ENCODE measurements at regions of chr6 and their contacts with region 1.

Region 1: DNA sequence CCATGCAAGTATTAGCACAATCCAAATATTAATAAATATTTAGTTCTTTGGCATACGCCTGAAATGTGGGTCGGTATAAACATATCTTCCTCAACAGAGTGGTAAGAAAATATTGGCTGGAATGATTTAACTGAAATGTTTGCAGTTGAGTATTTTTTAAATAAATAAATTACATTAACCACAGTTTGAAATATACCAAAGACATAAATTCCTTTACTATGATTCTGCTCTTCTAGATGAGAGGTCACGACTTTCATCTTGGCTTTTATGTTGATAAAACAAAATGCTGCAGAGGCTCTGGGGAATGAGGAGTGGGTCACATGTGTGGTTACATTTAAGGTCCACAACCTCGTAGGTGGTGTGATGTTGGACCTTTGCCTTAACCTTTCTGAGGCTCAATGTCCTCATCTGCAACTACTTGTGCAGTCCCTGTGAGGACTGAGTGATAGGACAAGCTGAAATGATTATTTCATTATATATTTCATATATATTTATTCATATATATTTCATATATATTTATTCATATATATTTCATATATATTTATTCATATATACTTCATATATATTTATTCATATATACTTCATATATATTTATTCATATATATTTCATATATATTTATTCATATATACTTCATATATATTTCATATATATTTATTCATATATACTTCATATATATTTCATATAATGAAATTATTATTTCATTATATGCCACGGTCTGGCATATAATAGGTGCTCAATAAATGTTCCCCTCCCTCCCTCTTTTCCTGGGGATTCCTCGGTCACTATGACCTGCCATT is 107.4 kb downstream of the SAMD5 start:
- DNase-seq: no peak
- ATAC-seq: no peak
- H3K4me3 ChIP-seq: no peak overlapping the region
- H3K27ac ChIP-seq: no peak overlapping the region
- H3K4me1 ChIP-seq: no peaks in the 10 kb centered on the region
- H3K27me3 ChIP-seq: no peaks in the 10 kb centered on the region
- CTCF ChIP-seq: no peak
- POLR2A ChIP-seq: no peak
- RAD21 ChIP-seq: no peak

Region 2: DNA sequence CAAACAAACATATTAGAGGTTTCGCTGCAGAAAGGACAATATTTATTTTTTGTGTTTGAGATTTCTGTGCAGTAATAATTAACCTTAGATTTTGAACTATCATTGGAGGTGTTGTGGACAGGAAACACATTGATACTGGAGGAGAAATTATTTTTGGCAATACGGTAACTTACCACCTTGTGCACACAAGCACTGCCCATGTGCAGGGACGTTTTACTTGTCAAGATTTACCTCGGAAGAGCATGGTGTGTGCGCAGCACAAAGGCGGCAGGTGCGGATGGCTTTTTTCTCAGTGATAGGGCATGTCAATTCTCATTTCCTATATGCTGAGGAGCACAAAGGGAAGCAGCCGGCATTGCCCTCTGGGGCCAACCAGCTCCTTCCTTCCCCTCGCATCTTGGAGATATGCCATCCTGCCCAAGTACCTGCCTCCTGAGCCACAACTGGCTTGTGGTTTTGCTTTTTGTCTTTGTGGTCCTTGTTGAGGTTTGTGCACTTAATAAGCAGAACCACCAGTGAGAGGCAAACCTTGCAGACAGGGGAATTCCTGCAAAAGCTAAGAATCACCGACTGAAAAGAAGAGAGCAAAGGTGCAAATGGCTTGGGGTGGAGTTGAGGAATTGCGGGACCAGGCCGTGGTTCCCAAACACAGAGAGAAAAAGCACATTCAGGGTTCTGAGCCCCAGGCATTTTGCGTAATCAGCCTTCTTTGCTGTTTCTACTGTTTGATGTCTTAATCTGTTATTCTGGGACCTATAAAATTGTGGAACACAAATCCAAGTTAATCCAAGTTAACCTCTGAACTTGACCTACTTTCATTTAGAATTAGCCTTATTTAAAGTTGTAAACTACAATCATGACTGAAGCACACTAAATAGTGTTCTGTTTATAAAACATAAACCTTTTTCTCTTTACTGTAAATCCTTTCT is 85.5 kb before region 1 on chr6:
- CTCF ChIA-PET with region 1: no interaction called
- POLR2A ChIA-PET with region 1: no interaction called
- RAD21 ChIA-PET with region 1: no interaction called
- intact Hi-C with region 1: no loop called
- DNase-seq: no peak
- ATAC-seq: no peak
- H3K4me3 ChIP-seq: no peak overlapping the region
- H3K27ac ChIP-seq: no peak overlapping the region
- H3K4me1 ChIP-seq: peaks cover 4 to 6% of the 10 kb centered on the region in 2 experiments; a peak in 2 of 4 replicates
- H3K27me3 ChIP-seq: no peaks in the 10 kb centered on the region
- CTCF ChIP-seq: no peak
- POLR2A ChIP-seq: no peak
- RAD21 ChIP-seq: no peak

Region 3: GRCh38 chr6:147579667-147580066 is 36.2 kb before region 1 on chr6:
- CTCF ChIA-PET with region 1: no interaction called
- POLR2A ChIA-PET with region 1: no interaction called
- RAD21 ChIA-PET with region 1: no interaction called
- intact Hi-C with region 1: loop called (anchors 1 kb)
- DNase-seq: no peak
- ATAC-seq: no peak
- H3K4me3 ChIP-seq: no peak overlapping the region
- H3K27ac ChIP-seq: no peak overlapping the region
- H3K4me1 ChIP-seq: no peaks in the 10 kb centered on the region
- H3K27me3 ChIP-seq: no peaks in the 10 kb centered on the region
- CTCF ChIP-seq: no peak
- POLR2A ChIP-seq: no peak
- RAD21 ChIP-seq: no peak

Measured in HCT116 (cell line).